Upper lobe of right lung (tissue), 1 donor: ENCODE measurements at regions of chr1 and their contacts with region 1.

Region 1: GRCh38 chr1:3618881-3619671 is 5.7 kb upstream of the TPRG1L start:
- DNase-seq: no peak
- ATAC-seq: peak; percentile 89
- H3K4me3 ChIP-seq: no peak overlapping the region
- H3K27ac ChIP-seq: no peak overlapping the region
- H3K4me1 ChIP-seq: peaks cover 20% of the 10 kb centered on the region
- H3K27me3 ChIP-seq: no peaks in the 10 kb centered on the region
- CTCF ChIP-seq: peak; percentile 81

Region 2: DNA sequence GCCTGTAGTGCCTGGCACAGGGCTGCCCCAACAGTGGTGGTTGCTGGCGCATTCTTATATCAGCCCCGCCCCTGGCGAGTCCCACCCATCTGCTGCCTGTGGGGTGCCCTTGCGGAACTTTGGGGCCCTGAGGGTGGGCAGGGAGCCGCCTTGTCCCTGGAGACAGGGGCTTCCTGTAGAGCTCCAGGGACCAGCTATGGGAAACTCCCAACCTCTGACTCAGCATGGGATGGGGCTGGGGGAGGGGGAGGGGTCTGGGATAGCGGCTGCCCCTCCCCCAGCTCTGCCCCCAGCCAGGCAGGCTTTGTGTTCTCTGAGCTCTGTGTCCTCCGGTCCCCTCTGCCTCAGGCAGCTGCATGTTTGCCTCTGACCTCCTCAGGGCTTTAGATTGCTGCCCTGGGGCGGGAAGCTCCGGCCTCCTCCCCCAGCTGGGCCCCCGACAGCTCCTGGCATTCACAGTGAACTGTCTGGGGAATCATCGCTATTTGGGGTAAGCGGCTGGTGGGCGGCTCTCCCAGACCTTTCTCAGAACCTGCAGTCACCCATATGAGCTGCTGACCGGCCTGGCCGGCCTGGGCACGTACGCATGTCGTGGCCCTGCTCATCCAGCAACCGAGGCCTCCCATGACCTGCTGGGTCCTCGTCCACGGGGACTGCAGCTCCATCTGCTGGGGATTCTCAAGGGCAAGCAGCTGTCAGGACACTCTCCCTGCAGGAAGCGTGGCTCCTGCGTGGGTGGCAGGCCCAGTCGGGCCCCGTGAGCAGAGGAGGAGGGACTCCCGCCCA is 147.6 kb before region 1 on chr1:
- intact Hi-C with region 1: no loop called
- DNase-seq: no peak
- ATAC-seq: peak; percentile 3
- H3K4me3 ChIP-seq: no peak overlapping the region
- H3K27ac ChIP-seq: no peak overlapping the region
- H3K4me1 ChIP-seq: peaks cover 4% of the 10 kb centered on the region
- H3K27me3 ChIP-seq: no peaks in the 10 kb centered on the region
- CTCF ChIP-seq: peak; percentile 16

Region 3: DNA sequence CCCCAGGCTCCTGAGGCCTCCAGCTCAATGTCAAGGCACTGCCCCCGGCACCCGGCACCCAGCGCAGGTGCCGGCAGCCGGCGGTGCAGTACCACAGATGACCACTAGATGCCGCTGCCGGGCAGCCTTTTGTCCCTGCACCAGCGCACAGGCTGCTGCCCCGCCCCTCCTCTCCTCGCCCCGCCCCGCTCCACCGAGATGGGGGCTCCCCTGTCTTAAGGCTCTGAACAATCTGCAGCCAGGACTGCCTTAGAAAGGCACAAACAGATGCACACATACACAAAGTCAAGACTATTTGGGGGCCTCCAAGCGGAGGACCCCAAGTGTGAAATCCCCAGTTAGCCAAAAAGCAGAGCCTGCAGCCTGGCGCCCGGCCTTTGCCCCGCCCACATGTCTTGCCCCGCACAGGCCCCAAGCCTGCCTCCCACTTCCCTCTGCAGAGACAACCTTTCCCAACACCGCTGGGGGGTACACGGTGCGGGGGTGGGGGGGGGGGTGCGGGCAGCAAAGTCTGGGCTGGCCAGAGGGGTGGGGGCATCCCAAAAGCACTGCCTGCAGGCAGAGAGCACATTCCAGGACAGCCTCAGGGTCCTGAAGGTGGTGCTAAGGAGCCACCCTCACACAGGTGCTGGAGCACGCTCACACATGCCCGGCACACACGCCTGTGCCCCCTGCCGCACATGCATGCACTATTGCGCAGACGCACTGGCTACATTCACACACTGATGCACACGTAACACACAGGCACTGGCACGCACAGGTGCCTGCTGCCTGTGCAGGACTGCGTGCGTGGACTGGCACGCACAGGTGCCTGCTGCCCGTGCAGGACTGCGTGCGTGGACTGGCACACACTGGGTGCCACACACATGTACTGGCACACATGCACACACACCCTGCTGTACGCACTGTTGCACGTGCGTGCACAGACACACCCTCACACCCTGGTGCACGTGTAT is 127.5 kb before region 1 on chr1:
- intact Hi-C with region 1: loop called (anchors 2 kb)
- DNase-seq: peak; percentile 89
- ATAC-seq: peak; percentile 91
- H3K4me3 ChIP-seq: no peak overlapping the region
- H3K27ac ChIP-seq: no peak overlapping the region
- H3K4me1 ChIP-seq: no peaks in the 10 kb centered on the region
- H3K27me3 ChIP-seq: no peaks in the 10 kb centered on the region
- CTCF ChIP-seq: peak; percentile 100

Region 4: GRCh38 chr1:3564921-3565827 is 53.9 kb before region 1 on chr1:
- intact Hi-C with region 1: loop called (anchors 5 kb)
- DNase-seq: no peak
- ATAC-seq: peak; percentile 36
- H3K4me3 ChIP-seq: no peak overlapping the region
- H3K27ac ChIP-seq: no peak overlapping the region
- H3K4me1 ChIP-seq: no peaks in the 10 kb centered on the region
- H3K27me3 ChIP-seq: no peaks in the 10 kb centered on the region
- CTCF ChIP-seq: peak; percentile 92